ENCODE measurements at regions of chr3 and their contacts with region 1.

Region 1: DNA sequence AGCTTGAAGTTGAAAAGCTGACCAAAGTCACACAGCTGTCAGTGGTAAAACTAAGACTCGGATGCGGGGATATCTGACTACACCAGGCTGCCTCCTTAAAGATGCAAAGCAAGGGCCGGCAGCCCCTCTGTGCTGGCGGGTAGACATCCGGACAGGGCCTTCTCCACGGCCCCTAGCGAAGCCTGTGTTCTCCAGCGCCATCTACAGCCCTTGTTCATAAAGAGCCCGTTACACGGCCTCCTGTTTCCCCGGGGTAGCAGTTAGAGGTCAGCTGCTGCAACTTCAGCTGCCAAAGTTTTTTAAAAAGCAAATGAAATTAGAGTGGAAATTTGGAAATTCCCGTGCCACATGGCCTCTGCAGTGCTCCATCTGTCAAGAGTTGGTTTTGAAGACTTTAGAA is 383.0 kb downstream of the TBL1XR1 start:
- DNase-seq: peak; percentile 12
- ATAC-seq: peak; percentile 96
- H3K4me3 ChIP-seq: no peak overlapping the region
- H3K27ac ChIP-seq: no peak overlapping the region
- H3K4me1 ChIP-seq: no peaks in the 10 kb centered on the region
- H3K27me3 ChIP-seq: no peaks in the 10 kb centered on the region
- CTCF ChIP-seq: peak; percentile 90

Region 2: GRCh38 chr3:176526225-176526624 is 288.1 kb before region 1 on chr3:
- CTCF ChIA-PET with region 1: interaction called, 4 read pairs
- POLR2A ChIA-PET with region 1: no interaction called
- in situ Hi-C with region 1: no loop called
- intact Hi-C with region 1: loop called (anchors 10 kb)
- DNase-seq: no peak
- ATAC-seq: no peak
- H3K4me3 ChIP-seq: no peak overlapping the region
- H3K27ac ChIP-seq: no peak overlapping the region
- H3K4me1 ChIP-seq: no peaks in the 10 kb centered on the region
- H3K27me3 ChIP-seq: no peaks in the 10 kb centered on the region
- CTCF ChIP-seq: no peak

Region 3: DNA sequence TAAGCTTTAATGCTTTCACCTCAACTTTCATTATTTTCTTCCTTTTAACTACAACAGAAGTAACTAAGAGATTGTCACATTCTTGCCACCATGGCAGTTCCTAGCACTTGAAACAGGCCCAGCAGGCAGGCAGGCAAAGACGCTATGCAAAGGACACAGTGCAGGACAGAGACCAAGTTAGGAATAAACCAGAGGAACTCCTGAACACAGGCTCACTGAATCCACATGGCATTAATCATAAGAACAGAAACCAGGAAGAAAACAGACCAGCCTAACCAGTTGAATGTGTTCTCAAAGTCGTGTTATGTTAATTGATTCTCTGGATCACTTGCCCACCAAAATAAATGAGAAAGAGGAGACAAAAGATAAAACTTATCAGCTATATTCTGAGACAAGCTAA is 14.6 kb before region 1 on chr3:
- CTCF ChIA-PET with region 1: interaction called, 13 read pairs
- POLR2A ChIA-PET with region 1: no interaction called
- in situ Hi-C with region 1: no loop called
- intact Hi-C with region 1: no loop called
- DNase-seq: no peak
- ATAC-seq: no peak
- H3K4me3 ChIP-seq: no peak overlapping the region
- H3K27ac ChIP-seq: no peak overlapping the region
- H3K4me1 ChIP-seq: no peaks in the 10 kb centered on the region
- H3K27me3 ChIP-seq: no peaks in the 10 kb centered on the region
- CTCF ChIP-seq: no peak

Region 4: DNA sequence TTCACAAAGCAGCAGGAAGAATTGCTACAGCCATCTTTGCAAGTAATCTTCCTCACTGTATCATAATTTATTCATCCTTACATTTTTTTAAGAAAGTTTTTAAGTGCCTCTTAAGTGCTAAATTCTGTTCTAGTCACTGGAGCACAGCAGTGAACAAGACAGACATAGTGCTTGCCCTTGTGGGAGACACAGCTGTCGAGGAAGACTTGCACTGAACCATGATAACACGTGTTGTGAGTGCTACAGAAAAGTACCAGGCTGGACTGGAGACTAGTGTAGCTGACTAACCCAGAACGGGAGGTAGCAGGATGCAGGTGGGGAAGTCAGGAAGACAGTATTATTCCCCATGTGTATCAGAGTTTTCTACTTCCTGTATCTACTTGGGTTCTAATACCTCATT is 82.4 kb after region 1 on chr3:
- CTCF ChIA-PET with region 1: no interaction called
- POLR2A ChIA-PET with region 1: no interaction called
- in situ Hi-C with region 1: no loop called
- intact Hi-C with region 1: no loop called
- DNase-seq: no peak
- ATAC-seq: no peak
- H3K4me3 ChIP-seq: no peak overlapping the region
- H3K27ac ChIP-seq: no peak overlapping the region
- H3K4me1 ChIP-seq: no peaks in the 10 kb centered on the region
- H3K27me3 ChIP-seq: no peaks in the 10 kb centered on the region
- CTCF ChIP-seq: no peak

Measured in Panc1 (cell line).